AG04449 (cell line): ENCODE measurements at regions of chr22 and their contacts with region 1.

Region 1: GRCh38 chr22:27113211-27113635 is 455.8 kb downstream of the MIAT start:
- DNase-seq: peak; percentile 88
- H3K4me3 ChIP-seq: no peak overlapping the region
- CTCF ChIP-seq: peak; percentile 4

Region 2: DNA sequence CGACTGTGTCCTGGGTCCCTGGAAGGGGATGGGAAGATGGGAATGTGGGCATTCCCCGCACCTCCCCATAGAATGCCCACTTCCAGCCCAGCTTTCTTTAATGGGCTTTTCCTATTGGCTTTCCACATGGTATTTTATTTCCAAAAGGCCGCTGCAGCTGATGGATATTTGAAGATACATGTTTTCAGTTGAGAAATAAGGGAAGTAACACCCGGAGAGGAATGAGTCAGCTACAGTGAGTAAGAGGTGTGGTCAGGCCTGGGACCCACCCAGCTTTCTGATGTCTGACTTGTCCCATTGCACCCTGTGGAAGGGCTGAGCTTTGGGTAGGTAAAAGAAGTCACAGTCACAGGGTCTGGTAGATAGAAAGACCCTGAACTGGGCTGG is 21.1 kb after region 1 on chr22:
- CTCF ChIA-PET with region 1: no interaction called
- POLR2A ChIA-PET with region 1: interaction called, 14 read pairs
- DNase-seq: peak; percentile 63
- H3K4me3 ChIP-seq: no peak overlapping the region
- CTCF ChIP-seq: no peak